GM18951 (cell line): ENCODE measurements at regions of chr5 and their contacts with region 1.

Region 1: GRCh38 chr5:116076496-116076895 is 8.3 kb upstream of the COMMD10 start:
- POLR2A ChIP-seq: no peak

Region 2: DNA sequence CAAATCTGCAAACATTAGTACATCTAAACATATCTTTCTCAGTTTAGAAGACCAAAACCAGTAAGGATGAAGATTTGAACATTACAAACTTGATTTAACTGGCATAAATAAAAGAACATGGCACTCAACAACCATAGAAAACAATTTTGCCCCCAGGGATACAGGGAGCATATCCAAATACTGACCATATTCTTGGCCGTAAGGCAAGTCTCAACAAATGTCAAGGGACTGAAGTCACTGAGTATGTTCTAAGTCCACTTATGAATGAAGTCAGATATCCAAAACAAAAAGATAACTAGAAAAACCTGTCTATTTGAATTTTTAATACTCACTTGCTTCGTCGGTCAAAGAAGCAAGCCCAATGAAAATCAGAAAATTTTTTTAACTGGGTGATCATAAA is 546.1 kb before region 1 on chr5:
- in situ Hi-C with region 1: no loop called
- POLR2A ChIP-seq: no peak

Region 3: GRCh38 chr5:115831163-115831768 is 245.2 kb before region 1 on chr5:
- in situ Hi-C with region 1: loop called (anchors 10 kb)
- POLR2A ChIP-seq: no peak